Heart right ventricle (tissue), 16 donors: ENCODE measurements at regions of chr3 and their contacts with region 1.

Region 1: GRCh38 chr3:195508185-195508584 is 34.9 kb downstream of the PPP1R2 start:
- DNase-seq: no peak
- ATAC-seq: peak in 1 of 8 donors; percentile 45
- H3K4me3 ChIP-seq: no peak overlapping the region
- H3K27ac ChIP-seq: peak overlapping the region in 1 of 10 donors; percentile 18
- H3K4me1 ChIP-seq: peaks cover 0 to 17% (median 4%) of the 10 kb centered on the region in 9 donors
- H3K27me3 ChIP-seq: no peaks in the 10 kb centered on the region
- CTCF ChIP-seq: no peak

Region 2: DNA sequence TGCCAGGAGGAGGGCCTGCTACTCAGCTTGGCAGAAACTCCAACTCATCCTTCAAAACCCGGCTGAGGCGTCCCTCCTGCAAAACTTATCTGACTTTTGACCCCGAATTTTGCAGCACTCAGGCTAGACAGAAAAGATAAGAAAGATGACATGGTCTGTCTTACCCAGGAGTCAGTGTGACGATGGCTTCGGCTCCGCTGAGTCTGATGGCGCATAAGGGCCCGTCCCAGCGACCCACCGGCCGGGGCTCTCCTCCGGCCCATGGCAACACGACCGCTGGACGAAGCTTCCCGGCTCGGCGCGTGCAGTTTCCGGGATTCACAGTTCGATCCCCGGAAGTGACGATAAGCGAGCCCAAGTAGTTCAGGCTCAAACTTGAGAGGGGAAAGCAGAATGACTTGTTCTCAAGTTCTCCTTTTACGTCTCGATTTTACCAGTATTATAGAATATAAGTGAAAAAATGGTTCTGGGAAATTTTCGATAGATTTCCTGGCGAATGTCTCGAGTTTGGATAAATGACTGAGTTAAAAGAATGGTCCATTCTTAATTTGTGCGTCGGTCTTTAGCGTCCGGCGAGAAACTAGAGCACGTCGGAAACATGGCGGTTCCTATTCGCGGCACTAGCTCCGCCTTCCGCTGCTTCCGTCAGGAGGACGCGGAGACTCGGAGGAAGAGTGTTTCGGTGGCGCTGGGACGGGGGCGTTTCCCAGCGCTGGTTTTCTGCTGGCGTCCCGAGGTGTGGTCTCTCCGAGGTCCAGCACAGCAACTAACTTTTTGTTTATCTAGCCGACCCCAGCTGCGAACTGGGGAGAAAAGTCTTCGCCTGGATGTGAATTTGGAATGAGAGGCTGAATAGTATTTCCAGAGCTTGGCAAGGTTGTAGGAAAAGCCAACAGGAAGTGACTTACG is 836.0 kb before region 1 on chr3 and contains the start of gene LSG1:
- intact Hi-C with region 1: loop called in 1 of 10 experiments (anchors 10 kb)
- DNase-seq: peak; percentile 89 to 95
- ATAC-seq: peak; percentile 93 to 97 (median 96)
- H3K4me3 ChIP-seq: peak within 1 kb of the TSS; percentile 54 to 97 (median 83)
- H3K27ac ChIP-seq: peak within 1 kb of the TSS; percentile 73 to 95 (median 92)
- H3K4me1 ChIP-seq: peaks cover 6 to 33% (median 18%) of the 10 kb centered on the region in 9 donors
- H3K27me3 ChIP-seq: no peaks in the 10 kb centered on the region
- CTCF ChIP-seq: no peak
- total RNA-seq, gene LSG1: 11.9 to 22.1 (median 18.9) TPM

Region 3: GRCh38 chr3:195297446-195297845 is 210.7 kb before region 1 on chr3:
- intact Hi-C with region 1: loop called in 1 of 10 experiments (anchors 5 kb)
- DNase-seq: no peak
- ATAC-seq: no peak
- H3K4me3 ChIP-seq: no peak overlapping the region
- H3K27ac ChIP-seq: no peak overlapping the region
- H3K4me1 ChIP-seq: no peaks in the 10 kb centered on the region
- H3K27me3 ChIP-seq: no peaks in the 10 kb centered on the region
- CTCF ChIP-seq: no peak

Region 4: DNA sequence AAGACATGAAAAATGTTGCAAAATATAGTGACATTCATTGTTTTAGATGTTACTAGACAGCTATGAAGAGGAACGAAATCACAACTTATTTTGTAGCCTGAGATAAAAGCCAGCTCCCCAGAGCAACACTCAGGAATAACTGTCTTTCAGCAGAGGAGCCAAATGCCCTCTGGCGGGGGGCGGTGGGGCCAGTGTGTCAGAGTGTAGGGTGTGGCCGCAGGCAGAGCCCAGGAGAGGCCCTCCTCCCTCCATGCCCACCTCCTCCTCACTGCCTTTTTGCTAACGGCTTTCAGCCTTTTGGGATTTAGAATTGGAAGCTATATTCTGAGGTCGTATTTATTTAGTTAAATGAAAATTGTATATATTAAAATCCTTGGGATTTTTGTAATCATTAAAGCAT is 58.6 kb after region 1 on chr3:
- intact Hi-C with region 1: no loop called
- DNase-seq: no peak
- ATAC-seq: no peak
- H3K4me3 ChIP-seq: no peak overlapping the region
- H3K27ac ChIP-seq: no peak overlapping the region
- H3K4me1 ChIP-seq: peaks cover 0 to 20% (median 18%) of the 10 kb centered on the region in 9 donors
- H3K27me3 ChIP-seq: peaks cover 0 to 13% (median 0%) of the 10 kb centered on the region in 7 donors
- CTCF ChIP-seq: no peak